MCF 10A (cell line): ENCODE measurements at regions of chr1 and their contacts with region 1.

Region 1: GRCh38 chr1:227234998-227235405 is 83.3 kb downstream of the CDC42BPA start:
- DNase-seq: peak; percentile 84
- H3K4me3 Mint-ChIP-seq: no peak overlapping the region
- H3K27ac Mint-ChIP-seq: no peak overlapping the region
- H3K4me1 Mint-ChIP-seq: peaks cover 15% of the 10 kb centered on the region
- H3K27me3 Mint-ChIP-seq: no peaks in the 10 kb centered on the region
- CTCF ChIP-seq: peak; percentile 78

Region 2: GRCh38 chr1:227219715-227220292 is 15.2 kb before region 1 on chr1:
- CTCF ChIA-PET with region 1: interaction called, 22 read pairs
- POLR2A ChIA-PET with region 1: interaction called, 5 read pairs
- intact Hi-C with region 1: no loop called
- DNase-seq: no peak
- H3K4me3 Mint-ChIP-seq: no peak overlapping the region
- H3K27ac Mint-ChIP-seq: no peak overlapping the region
- H3K4me1 Mint-ChIP-seq: peaks cover 27% of the 10 kb centered on the region
- H3K27me3 Mint-ChIP-seq: no peaks in the 10 kb centered on the region
- CTCF ChIP-seq: no peak

Region 3: GRCh38 chr1:227245613-227246320 is 10.8 kb after region 1 on chr1:
- CTCF ChIA-PET with region 1: interaction called, 10 read pairs
- POLR2A ChIA-PET with region 1: interaction called, 8 read pairs
- intact Hi-C with region 1: no loop called
- DNase-seq: no peak
- H3K4me3 Mint-ChIP-seq: no peak overlapping the region
- H3K27ac Mint-ChIP-seq: peak overlapping the region; percentile 80
- H3K4me1 Mint-ChIP-seq: peaks cover 42% of the 10 kb centered on the region
- H3K27me3 Mint-ChIP-seq: no peaks in the 10 kb centered on the region
- CTCF ChIP-seq: no peak

Region 4: GRCh38 chr1:227299241-227299627 is 64.2 kb after region 1 on chr1:
- CTCF ChIA-PET with region 1: interaction called, 5 read pairs
- POLR2A ChIA-PET with region 1: interaction called, 12 read pairs
- intact Hi-C with region 1: no loop called
- DNase-seq: peak; percentile 55
- H3K4me3 Mint-ChIP-seq: peak overlapping the region; percentile 44
- H3K27ac Mint-ChIP-seq: peak overlapping the region; percentile 70
- H3K4me1 Mint-ChIP-seq: peaks cover 36% of the 10 kb centered on the region
- H3K27me3 Mint-ChIP-seq: no peaks in the 10 kb centered on the region
- CTCF ChIP-seq: no peak

Region 5: GRCh38 chr1:227576189-227576588 is 341.2 kb after region 1 on chr1:
- CTCF ChIA-PET with region 1: no interaction called
- POLR2A ChIA-PET with region 1: no interaction called
- intact Hi-C with region 1: no loop called
- DNase-seq: no peak
- H3K4me3 Mint-ChIP-seq: no peak overlapping the region
- H3K27ac Mint-ChIP-seq: no peak overlapping the region
- H3K4me1 Mint-ChIP-seq: no peaks in the 10 kb centered on the region
- H3K27me3 Mint-ChIP-seq: no peaks in the 10 kb centered on the region
- CTCF ChIP-seq: no peak